ENCODE measurements at regions of chr3 and their contacts with region 1.

Region 1: DNA sequence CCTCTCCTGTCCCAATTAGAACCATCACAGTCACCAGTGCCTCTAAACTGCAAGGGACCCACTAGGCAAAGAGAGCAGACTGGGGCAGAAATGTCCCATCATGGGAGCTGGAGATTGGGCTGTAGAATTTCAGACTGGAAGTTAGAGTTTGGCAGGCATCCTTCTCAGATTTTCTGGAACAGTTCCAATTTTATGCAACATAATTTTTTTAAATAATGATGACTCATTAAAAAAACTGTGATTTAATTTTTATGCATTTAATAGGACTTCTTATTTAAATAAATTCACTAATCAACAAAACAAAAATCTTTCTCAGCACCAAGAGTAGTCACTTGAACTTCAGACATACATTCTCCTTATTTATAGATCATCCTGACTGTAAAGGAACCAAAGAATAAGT is 84.6 kb upstream of the SLC7A14 start:
- DNase-seq: no peak
- ATAC-seq: no peak
- H3K4me3 ChIP-seq: no peak overlapping the region
- H3K27ac ChIP-seq: no peak overlapping the region
- H3K4me1 ChIP-seq: no peaks in the 10 kb centered on the region
- H3K27me3 ChIP-seq: no peaks in the 10 kb centered on the region
- CTCF ChIP-seq: no peak

Region 2: DNA sequence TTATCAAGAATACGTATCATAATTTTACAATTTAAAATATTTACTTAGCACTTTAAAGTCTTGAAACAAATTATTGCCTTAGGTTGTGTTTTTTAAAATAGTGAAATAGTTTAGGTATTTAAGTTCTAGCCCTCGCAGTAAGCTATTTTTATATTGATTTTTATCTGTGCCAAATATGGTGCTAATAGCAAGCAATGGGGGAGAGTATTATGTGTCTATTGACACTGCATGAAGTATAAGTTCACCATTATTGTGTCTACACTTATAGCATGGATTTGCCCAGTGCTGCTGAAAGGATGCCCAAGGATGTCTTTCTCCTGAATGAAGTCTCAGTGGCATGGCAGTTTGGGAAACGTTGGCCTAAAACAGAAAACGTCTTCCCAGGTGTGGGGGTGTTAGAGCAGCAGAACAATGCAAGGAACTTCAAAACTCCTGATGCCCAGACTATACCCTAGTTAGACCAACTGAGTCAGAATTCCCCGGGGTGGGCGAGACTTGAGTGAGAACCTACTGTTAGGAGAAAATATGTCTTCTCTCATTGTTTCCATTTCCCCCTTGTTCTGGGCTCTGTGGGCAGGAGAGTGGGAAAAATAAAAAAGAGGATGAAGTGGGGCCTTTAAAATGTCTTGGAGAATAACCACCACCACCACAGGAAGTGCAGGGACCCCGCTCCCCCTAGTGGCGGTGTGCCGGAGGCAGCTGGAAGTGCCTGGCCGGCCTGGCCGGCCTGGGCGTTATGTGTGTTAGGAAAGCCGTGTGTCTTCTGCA is 19.6 kb after region 1 on chr3:
- CTCF ChIA-PET with region 1: no interaction called
- POLR2A ChIA-PET with region 1: no interaction called
- intact Hi-C with region 1: loop called (anchors 2 kb)
- DNase-seq: peak; percentile 40
- ATAC-seq: peak; percentile 16; the same call in 1 of the 2 replicates
- H3K4me3 ChIP-seq: no peak overlapping the region
- H3K27ac ChIP-seq: no peak overlapping the region
- H3K4me1 ChIP-seq: peaks cover 30% of the 10 kb centered on the region
- H3K27me3 ChIP-seq: no peaks in the 10 kb centered on the region
- CTCF ChIP-seq: peak; percentile 64